ENCODE measurements at regions of chr17 and their contacts with region 1.

Region 1: DNA sequence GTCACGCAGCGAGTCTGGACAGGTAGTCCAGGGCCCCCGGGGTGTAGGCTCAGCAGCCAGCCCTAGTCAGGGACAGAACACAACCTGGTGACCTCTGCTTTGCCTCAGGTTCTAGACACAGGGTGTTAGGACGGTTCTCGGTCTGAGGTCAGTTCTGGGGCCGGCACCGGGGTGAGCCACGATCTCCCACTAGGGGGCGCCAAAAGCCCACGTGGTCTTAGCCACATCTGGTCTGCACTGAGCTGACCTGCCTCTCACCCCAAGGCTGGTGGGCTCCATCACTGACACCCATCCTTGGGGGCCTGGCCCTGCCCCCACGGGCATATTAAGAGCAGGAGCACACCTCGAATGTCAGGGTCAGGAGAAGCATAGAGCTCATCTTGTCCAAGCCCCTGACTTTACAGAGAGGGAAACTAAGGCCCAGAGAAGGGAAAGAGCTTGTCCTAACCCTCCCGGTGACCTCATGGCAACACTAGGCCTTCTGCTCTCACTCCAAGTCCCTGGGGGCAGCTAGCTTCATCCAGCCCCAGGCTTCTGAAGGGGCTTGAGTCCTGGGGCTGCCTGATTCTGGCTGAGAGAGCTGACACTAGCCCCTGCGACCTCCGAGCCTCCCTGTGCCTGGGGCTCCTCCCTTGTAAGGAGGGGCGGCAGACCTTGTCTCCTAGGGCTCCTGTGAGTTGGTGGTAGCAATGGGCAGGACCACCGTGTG is 9.0 kb downstream of the SLC5A10 start:
- DNase-seq: peak; percentile 69
- H3K4me3 Mint-ChIP-seq: no peak overlapping the region
- H3K27ac Mint-ChIP-seq: peak overlapping the region; percentile 40
- H3K4me1 Mint-ChIP-seq: peaks cover 24% of the 10 kb centered on the region
- H3K27me3 Mint-ChIP-seq: no peaks in the 10 kb centered on the region

Region 2: GRCh38 chr17:18904482-18904881 is 56.5 kb before region 1 on chr17:
- intact Hi-C with region 1: loop called (anchors 5 kb)
- DNase-seq: no peak
- H3K4me3 Mint-ChIP-seq: no peak overlapping the region
- H3K27ac Mint-ChIP-seq: no peak overlapping the region
- H3K4me1 Mint-ChIP-seq: peaks cover 33% of the 10 kb centered on the region
- H3K27me3 Mint-ChIP-seq: no peaks in the 10 kb centered on the region

Region 3: DNA sequence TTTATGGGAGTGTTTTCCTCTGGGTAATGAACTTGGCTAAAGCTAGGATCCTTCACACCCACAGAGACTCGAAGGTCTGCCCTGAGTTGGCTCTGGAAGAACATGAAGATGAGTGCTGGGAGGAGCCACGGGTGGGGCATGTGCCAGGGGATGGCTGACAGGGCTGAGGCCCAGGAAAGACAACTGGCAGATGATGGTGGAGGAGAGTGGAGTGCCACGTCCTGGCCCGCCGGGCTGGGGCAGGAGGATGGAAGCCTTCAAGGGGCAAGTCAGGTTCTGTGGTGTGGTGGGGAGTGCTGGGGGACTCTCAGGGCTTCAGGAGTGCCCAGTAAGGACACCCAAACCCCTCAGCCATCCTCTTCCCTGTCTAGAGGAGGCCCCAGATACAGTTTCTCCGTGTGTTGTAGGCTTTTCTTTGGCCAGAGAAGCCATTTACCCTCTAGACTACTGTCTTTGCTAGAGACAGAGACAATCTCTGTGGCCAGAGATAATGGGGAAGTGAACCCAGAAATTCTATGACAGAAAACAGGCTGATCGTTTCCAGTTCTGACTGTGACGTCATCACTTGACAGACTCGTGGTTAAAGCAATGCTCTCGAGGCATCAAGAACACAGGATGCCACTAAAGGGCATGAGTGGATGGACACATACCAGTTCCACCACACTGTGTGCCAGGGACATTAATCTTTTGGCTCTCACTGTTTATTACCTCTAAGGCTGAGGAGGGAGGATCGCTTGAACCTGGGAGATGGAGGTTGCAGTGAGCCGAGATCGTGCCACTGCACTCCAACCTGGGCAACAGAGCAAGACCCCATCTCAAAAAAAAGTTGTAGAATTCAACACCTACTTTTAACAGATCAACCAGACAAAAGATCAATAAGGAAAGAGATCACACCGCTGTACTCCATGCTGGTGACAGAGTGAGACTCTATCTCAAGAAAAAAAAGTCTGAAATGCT is 27.6 kb before region 1 on chr17:
- intact Hi-C with region 1: no loop called
- DNase-seq: no peak
- H3K4me3 Mint-ChIP-seq: no peak overlapping the region
- H3K27ac Mint-ChIP-seq: peak overlapping the region; percentile 38
- H3K4me1 Mint-ChIP-seq: peaks cover 20% of the 10 kb centered on the region
- H3K27me3 Mint-ChIP-seq: peaks cover 4% of the 10 kb centered on the region

Region 4: GRCh38 chr17:19019036-19019941 is 58.3 kb after region 1 on chr17:
- intact Hi-C with region 1: loop called (anchors 10 kb)
- DNase-seq: no peak
- H3K4me3 Mint-ChIP-seq: no peak overlapping the region
- H3K27ac Mint-ChIP-seq: no peak overlapping the region
- H3K4me1 Mint-ChIP-seq: peaks cover 2% of the 10 kb centered on the region
- H3K27me3 Mint-ChIP-seq: no peaks in the 10 kb centered on the region